Heart right ventricle (tissue), 16 donors: ENCODE measurements at regions of chr12 and their contacts with region 1.

Region 1: DNA sequence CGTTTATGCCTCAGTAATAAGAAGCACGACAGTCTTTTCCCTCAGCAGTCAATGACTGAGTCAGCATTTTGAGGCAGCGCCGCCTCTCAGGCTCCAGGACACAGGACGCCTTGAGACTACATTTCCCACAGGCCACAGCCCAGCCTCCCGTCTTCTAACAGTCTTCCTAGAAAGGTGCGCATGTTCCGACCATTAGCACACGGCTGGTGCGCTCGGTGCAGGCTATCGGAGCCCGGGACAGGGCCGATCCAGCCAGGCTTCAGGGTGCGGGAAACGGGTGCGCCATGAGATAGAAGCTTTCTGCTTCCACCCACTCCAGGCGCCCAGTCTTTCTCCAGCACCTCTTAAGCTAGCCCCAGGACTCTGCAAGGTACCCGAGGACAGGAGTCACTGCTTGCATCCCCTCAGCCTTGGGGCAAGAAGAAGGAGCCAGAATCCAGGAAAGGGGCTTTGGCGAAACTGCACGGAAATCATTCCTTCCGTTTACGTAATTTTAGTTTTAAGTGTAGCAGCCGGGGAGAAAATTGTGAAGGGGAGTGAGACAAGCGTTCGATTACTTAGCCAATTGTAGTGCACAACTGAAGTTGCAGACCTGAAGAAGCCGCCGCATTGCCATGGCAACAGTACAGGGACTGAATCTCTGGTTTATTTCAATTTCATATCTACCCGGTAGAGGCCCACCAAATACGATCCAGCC is 54.0 kb downstream of the ZNF641 start:
- DNase-seq: peak; percentile 72 to 81
- ATAC-seq: peak; percentile 94 to 100 (median 99)
- H3K4me3 ChIP-seq: peak overlapping the region; percentile 29 to 77 (median 60)
- H3K27ac ChIP-seq: peak overlapping the region in 4 of 10 donors; percentile 19 to 57 (median 37)
- H3K4me1 ChIP-seq: peaks cover 0 to 12% (median 7%) of the 10 kb centered on the region in 9 donors
- H3K27me3 ChIP-seq: no peaks in the 10 kb centered on the region
- CTCF ChIP-seq: no peak

Region 2: DNA sequence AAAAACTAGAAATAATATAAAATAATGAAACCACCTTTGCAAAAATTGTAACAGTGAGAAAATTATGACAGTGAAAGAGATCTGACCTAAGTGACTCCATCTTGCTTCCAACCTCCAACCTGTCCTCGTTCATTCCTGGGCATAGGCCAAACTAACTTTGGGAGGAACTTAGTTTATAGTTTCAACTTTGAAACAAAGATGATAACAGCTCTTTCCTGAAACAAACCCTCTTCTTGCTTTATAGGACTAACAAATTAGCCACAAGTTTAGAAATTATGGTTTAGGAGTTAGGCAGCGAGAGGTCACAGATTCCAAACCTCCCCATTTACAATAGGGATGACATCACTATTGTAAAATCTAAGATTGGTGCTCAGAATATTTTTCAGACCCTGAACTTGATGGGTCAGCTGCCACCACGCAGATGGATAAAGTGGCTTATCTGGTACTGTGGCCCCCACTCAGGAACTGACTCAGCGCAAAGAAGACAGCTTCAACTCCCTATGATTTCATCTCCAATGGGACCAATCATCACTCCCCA is 60.9 kb before region 1 on chr12:
- intact Hi-C with region 1: no loop called
- DNase-seq: no peak
- ATAC-seq: no peak
- H3K4me3 ChIP-seq: no peak overlapping the region
- H3K27ac ChIP-seq: no peak overlapping the region
- H3K4me1 ChIP-seq: no peaks in the 10 kb centered on the region
- H3K27me3 ChIP-seq: no peaks in the 10 kb centered on the region
- CTCF ChIP-seq: no peak

Region 3: DNA sequence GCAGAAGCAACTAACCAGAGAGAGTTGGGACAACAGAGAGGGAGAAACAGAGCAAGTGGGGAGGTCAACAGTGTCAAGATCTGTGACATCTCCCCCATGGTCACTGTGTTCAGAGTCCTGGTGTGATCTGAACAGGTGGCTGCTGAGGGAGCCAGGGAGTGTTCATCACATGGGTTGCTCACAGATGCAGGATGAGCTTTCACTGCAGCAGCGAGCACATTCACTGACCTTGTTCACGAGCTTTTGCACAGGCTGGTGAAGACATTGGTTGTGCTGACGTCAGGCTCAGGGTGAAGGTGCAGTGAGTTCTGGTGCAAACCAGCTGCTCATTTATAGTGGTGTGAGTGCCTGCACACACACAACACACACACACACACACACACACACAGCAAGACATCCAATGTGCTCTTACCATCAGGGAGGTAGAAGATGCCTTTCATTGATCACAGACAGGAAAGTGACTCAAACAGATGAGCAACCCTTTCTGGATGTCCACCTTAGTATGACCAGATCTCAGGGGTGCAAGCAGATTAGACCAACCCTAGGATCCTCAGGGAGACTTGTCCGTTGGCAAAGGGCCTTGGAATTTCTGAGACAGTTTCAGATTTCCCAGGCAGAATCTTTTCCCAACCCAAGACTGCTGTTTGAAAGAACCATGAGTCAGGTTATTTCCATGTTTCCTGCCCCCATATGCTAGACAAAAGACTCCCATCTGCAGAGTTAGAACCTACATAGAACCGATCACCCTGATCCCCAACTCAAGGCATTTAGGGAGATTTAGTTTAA is 49.4 kb before region 1 on chr12:
- intact Hi-C with region 1: loop called in 1 of 10 experiments (anchors 2 kb)
- DNase-seq: no peak
- ATAC-seq: no peak
- H3K4me3 ChIP-seq: no peak overlapping the region
- H3K27ac ChIP-seq: no peak overlapping the region
- H3K4me1 ChIP-seq: no peaks in the 10 kb centered on the region
- H3K27me3 ChIP-seq: peaks cover 0 to 6% (median 0%) of the 10 kb centered on the region in 7 donors
- CTCF ChIP-seq: no peak

Region 4: GRCh38 chr12:48350249-48351021 is 53.7 kb after region 1 on chr12 and contains the start of gene ZNF641:
- intact Hi-C with region 1: loop called in 1 of 10 experiments (anchors 5 kb)
- DNase-seq: peak; percentile 82 to 90
- ATAC-seq: peak; percentile 90 to 97 (median 94)
- H3K4me3 ChIP-seq: peak within 1 kb of the TSS; percentile 64 to 92 (median 77)
- H3K27ac ChIP-seq: peak within 1 kb of the TSS; percentile 94 to 99 (median 97)
- H3K4me1 ChIP-seq: peaks cover 0 to 43% (median 25%) of the 10 kb centered on the region in 9 donors
- H3K27me3 ChIP-seq: no peaks in the 10 kb centered on the region
- CTCF ChIP-seq: peak in 1 of 9 donors; percentile 16
- total RNA-seq, gene ZNF641: 13.8 to 19.1 (median 15.5) TPM